Aorta (tissue), 5 donors: ENCODE measurements at regions of chr11 and their contacts with region 1.

Region 1: GRCh38 chr11:123159183-123159857 is 35.7 kb downstream of the CLMP start:
- DNase-seq: peak in 1 of 2 donors; percentile 78
- ATAC-seq: peak; percentile 57
- H3K4me3 ChIP-seq: no peak overlapping the region
- H3K27ac ChIP-seq: peak overlapping the region; percentile 88 to 98
- H3K4me1 ChIP-seq: peaks cover 0 to 3% of the 10 kb centered on the region in 2 donors
- H3K27me3 ChIP-seq: no peaks in the 10 kb centered on the region

Region 2: DNA sequence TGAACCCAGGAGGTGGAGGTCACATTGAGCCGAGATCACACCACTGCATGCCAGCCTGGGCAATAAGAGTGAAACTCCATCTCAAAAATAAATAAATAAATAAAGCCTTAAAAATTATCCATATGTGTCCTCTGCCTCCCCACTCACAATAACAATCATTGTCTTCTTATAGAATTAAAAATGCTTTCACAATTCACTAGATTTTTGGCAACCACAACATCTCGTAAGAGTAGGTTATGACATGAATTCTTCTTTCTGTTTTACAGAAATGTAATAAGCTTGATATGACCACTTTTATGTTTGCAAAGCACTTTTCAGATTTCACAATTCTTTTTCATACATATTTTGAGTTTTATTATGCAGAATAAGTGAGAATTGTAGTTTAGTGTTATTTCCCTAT is 42.8 kb before region 1 on chr11:
- intact Hi-C with region 1: loop called in 1 of 2 experiments (anchors 5 kb)
- DNase-seq: no peak
- ATAC-seq: no peak
- H3K4me3 ChIP-seq: no peak overlapping the region
- H3K27ac ChIP-seq: no peak overlapping the region
- H3K4me1 ChIP-seq: peaks cover 2 to 3% of the 10 kb centered on the region in 2 donors
- H3K27me3 ChIP-seq: no peaks in the 10 kb centered on the region

Region 3: GRCh38 chr11:123137431-123138224 is 21.7 kb before region 1 on chr11:
- intact Hi-C with region 1: loop called in 1 of 2 experiments (anchors 1 kb)
- DNase-seq: peak; percentile 89 to 92
- ATAC-seq: peak; percentile 84
- H3K4me3 ChIP-seq: no peak overlapping the region
- H3K27ac ChIP-seq: peak overlapping the region; percentile 7 to 99
- H3K4me1 ChIP-seq: peaks cover 0 to 5% of the 10 kb centered on the region in 2 donors
- H3K27me3 ChIP-seq: no peaks in the 10 kb centered on the region